Natural killer cell (primary cell): ENCODE measurements at regions of chr7 and their contacts with region 1.

Region 1: DNA sequence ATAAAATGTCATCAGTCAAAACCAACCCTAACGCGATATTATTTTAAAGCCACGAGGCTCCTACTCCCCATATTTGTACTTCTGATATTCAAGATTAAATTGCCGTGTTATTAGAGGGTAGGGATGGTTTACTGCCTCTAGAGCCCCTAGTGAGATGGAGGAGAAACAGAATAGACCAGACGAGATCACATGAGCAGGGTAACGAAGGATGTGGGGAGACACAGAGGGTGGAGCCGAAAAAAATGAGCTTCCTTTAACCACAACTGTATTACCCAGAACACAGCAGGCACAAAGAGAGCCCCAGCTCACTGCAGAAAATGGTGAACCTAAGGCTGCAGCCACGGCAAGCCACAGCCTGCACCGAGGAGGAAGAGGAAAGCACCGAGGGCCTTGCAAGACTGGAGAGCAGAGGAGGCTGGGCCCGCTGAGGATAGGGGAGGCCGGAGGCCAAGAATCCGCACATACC is 14.3 kb downstream of the ZC3HAV1 start:
- DNase-seq: peak; percentile 70 to 95
- ATAC-seq: peak; percentile 85 to 96 (median 95)
- H3K4me3 ChIP-seq: peak overlapping the region; percentile 21
- H3K4me3 Mint-ChIP-seq: peak overlapping the region; percentile 90
- H3K27ac ChIP-seq: peak overlapping the region; percentile 71
- H3K27ac Mint-ChIP-seq: peak overlapping the region; percentile 86 to 95
- H3K4me1 ChIP-seq: peaks cover 70% of the 10 kb centered on the region
- H3K4me1 Mint-ChIP-seq: peaks cover 70 to 79% of the 10 kb centered on the region in 2 donors
- H3K27me3 ChIP-seq: no peaks in the 10 kb centered on the region
- H3K27me3 Mint-ChIP-seq: no peaks in the 10 kb centered on the region
- CTCF ChIP-seq: no peak

Region 2: DNA sequence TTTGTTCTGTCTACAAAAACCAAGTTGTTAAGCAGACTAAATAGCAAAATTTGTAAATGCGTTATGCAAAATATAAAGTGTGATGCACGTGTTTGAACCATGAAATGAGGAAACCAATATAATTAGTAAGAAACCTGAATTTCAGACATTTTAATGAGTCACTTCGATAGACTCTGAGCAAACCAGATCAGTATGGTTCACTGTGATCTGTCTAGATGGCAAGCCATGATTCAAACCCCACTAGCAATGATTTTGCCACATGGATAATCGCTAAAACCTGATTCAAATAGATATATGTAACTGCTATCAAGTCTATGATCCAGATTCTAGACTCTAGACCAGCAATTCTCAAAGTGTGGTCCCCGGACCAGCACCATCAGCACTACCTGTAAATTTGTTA is 10.5 kb before region 1 on chr7:
- intact Hi-C with region 1: loop called (anchors 1 kb)
- DNase-seq: no peak
- ATAC-seq: no peak
- H3K4me3 ChIP-seq: no peak overlapping the region
- H3K4me3 Mint-ChIP-seq: peak overlapping the region; percentile 75
- H3K27ac ChIP-seq: peak overlapping the region; percentile 16
- H3K27ac Mint-ChIP-seq: peak overlapping the region; percentile 65 to 91
- H3K4me1 ChIP-seq: peaks cover 23% of the 10 kb centered on the region
- H3K4me1 Mint-ChIP-seq: peaks cover 80% of the 10 kb centered on the region in 2 donors
- H3K27me3 ChIP-seq: no peaks in the 10 kb centered on the region
- H3K27me3 Mint-ChIP-seq: no peaks in the 10 kb centered on the region
- CTCF ChIP-seq: no peak

Region 3: DNA sequence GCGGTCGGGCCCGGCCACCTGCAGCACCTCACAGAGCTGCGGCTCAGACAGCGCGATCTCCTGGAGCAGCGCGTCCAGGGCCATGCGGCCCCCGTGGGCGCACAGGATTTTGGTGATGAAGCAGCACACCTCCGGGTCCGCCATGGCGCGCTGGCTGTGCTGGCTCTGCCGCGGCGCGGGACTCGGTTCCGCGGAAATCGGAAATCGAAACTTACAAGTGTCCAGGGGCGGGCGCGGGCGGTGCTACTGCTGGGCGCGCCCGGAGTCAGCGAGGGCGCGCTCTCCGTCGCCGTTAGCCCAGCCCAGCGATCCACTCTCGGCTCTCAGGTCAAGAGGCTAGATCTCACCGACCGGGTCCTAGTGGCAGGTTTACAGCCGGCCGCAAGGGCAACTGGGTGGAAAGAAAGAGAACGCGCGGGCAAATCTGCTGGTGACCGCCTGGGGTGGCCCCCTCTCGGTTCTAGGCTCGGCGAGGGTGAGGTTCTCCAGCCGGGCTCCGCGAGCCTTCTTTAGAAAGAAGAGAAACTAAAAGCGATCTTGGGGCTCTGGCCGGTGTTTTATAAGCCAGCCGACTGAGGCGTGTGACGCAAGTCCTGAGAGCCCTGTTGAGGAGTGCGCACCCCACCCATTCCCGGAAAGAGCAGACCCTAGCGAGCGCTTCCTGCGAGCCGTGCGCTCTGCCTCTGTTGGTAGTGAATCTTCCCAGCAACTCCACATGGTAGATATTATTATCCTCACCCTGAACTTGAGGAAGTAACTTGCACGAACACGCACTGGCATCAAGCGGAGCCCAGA is 14.2 kb after region 1 on chr7 and contains the start of gene ZC3HAV1:
- intact Hi-C with region 1: loop called (anchors 1 kb)
- DNase-seq: peak; percentile 83 to 97
- ATAC-seq: peak; percentile 80 to 91 (median 83)
- H3K4me3 ChIP-seq: peak within 1 kb of the TSS; percentile 91
- H3K4me3 Mint-ChIP-seq: peak within 1 kb of the TSS; percentile 97
- H3K27ac ChIP-seq: peak within 1 kb of the TSS; percentile 89
- H3K27ac Mint-ChIP-seq: peak within 1 kb of the TSS; percentile 96 to 99
- H3K4me1 ChIP-seq: peaks cover 17% of the 10 kb centered on the region
- H3K4me1 Mint-ChIP-seq: peaks cover 50 to 51% of the 10 kb centered on the region in 2 donors
- H3K27me3 ChIP-seq: no peaks in the 10 kb centered on the region
- H3K27me3 Mint-ChIP-seq: no peaks in the 10 kb centered on the region
- CTCF ChIP-seq: no peak
- total RNA-seq, gene ZC3HAV1: 129 to 153 (median 137) TPM